ENCODE measurements at regions of chr14 and their contacts with region 1.

Region 1: DNA sequence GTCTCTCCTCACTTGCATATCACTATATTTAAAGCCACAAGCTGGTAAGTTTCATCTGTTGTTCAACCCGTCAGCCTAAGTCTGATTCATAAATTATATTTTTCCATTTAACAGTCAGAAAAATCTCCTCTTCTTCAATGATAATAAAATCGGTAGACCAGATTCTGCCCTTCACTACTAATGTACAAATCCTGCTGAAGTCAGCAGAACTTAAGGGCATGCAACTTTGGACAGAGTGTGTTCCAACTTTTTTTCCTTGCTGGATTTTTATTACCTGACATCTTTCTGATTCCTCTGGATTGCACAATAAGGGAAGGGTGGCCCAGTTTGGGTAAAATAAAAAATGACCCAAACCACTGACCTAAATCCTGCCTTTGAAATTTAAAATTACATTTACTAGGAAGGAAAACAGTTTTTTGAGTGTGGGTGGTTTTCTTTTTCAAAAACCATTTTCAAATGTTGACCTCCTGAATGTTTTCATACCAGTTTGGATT is 125.4 kb upstream of the DIO2 start:
- DNase-seq: no peak
- ATAC-seq: peak in 1 of 2 donors; percentile 45
- H3K4me3 ChIP-seq: no peak overlapping the region
- H3K27ac ChIP-seq: no peak overlapping the region
- H3K4me1 ChIP-seq: peaks cover 0 to 5% of the 10 kb centered on the region in 2 donors
- H3K27me3 ChIP-seq: no peaks in the 10 kb centered on the region
- CTCF ChIP-seq: no peak
- POLR2A ChIP-seq: no peak

Region 2: DNA sequence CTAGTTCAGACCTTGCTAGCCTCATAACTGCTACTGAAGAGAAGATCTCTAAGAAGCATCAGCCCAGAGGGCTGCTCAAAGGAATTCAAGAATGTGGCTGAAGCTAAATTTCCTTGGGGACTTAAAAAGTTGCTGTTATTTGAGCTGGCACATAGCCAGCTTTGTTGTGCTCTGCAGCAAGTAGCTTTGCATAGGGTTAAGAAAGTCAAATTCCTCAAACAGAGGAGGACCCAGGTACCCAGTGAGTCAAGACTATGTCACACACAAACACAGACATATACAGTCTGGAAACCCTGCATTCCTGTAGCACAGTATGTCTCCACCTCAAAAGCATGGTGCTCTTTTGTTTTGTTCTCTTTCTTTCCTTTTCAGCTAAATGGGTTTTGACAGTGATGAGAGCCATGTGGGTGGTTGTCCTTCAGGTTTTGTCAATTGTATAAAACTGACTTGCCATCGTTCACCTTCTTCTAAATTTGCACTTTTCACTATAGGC is 54.2 kb after region 1 on chr14:
- in situ Hi-C with region 1: no loop called
- intact Hi-C with region 1: loop called (anchors 2 kb)
- DNase-seq: no peak
- ATAC-seq: no peak
- H3K4me3 ChIP-seq: no peak overlapping the region
- H3K27ac ChIP-seq: no peak overlapping the region
- H3K4me1 ChIP-seq: peaks cover 0 to 22% of the 10 kb centered on the region in 2 donors
- H3K27me3 ChIP-seq: no peaks in the 10 kb centered on the region
- CTCF ChIP-seq: no peak
- POLR2A ChIP-seq: no peak

Region 3: GRCh38 chr14:80468331-80469122 is 131.9 kb after region 1 on chr14:
- in situ Hi-C with region 1: no loop called
- intact Hi-C with region 1: no loop called
- DNase-seq: no peak
- ATAC-seq: no peak
- H3K4me3 ChIP-seq: no peak overlapping the region
- H3K27ac ChIP-seq: no peak overlapping the region
- H3K4me1 ChIP-seq: no peaks in the 10 kb centered on the region
- H3K27me3 ChIP-seq: no peaks in the 10 kb centered on the region
- CTCF ChIP-seq: no peak
- POLR2A ChIP-seq: no peak